A673 (cell line): ENCODE measurements at regions of chr3 and their contacts with region 1.

Region 1: DNA sequence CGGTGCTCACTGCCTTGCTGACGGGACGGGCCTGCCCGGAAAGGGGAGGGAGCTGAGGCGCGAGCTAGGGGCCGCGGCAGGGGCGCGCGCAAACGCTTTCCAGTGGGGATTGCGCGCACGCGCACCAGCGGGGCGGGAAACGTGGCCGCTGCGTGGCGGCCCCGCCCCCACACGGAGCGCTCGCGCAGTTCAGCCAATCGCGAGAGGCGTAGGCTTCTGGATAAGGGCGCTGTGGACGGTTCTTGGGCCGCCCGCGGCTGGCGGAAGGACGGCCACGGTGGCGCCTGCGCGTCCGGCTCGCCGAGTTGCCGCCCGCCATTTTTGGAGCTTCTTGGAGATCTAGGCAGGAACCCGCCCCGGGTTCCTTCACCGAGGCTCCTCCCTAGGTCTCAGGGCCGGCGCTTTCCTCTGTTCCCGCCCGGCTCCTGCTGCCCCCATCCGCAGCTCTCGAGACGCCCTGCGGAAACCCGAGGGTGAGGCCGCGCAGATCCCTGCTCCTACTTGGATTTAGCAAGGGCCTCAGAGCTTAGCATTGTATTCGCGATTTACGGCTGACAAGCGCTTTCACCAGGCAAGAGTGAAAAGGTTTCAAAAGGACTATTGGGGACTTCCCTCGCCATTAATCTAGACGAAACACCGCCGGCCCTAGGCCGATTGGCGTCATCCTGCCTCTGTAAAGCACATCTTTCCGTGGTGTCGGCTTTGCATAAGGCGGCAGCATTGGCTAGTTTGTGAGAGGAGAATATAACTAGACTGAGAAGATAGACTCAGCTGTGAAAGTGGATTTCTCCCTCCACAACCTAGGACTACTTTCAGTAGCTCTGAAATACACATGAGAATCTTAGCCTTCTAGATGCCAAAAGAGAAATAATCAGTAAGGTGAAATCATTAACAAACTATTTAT is 496 bp upstream of the STAG1 start:
- DNase-seq: peak; percentile 99
- H3K4me3 ChIP-seq: peak overlapping the region; percentile 65
- H3K27ac ChIP-seq: peak overlapping the region; percentile 98
- H3K4me1 ChIP-seq: peaks cover 33% of the 10 kb centered on the region
- H3K27me3 ChIP-seq: no peaks in the 10 kb centered on the region
- CTCF ChIP-seq: no peak; the same call in 1 of the 2 replicates

Region 2: GRCh38 chr3:136196401-136197158 is 556.1 kb before region 1 on chr3:
- CTCF ChIA-PET with region 1: interaction called, 16 read pairs
- POLR2A ChIA-PET with region 1: no interaction called
- intact Hi-C with region 1: loop called (anchors 5 kb)
- DNase-seq: peak; percentile 100
- H3K4me3 ChIP-seq: peak overlapping the region; percentile 92
- H3K27ac ChIP-seq: peak overlapping the region; percentile 98
- H3K4me1 ChIP-seq: peaks cover 27% of the 10 kb centered on the region
- H3K27me3 ChIP-seq: no peaks in the 10 kb centered on the region
- CTCF ChIP-seq: no peak

Region 3: GRCh38 chr3:136390574-136390973 is 362.1 kb before region 1 on chr3:
- CTCF ChIA-PET with region 1: interaction called, 38 read pairs
- POLR2A ChIA-PET with region 1: no interaction called
- intact Hi-C with region 1: loop called (anchors 1 kb)
- DNase-seq: no peak
- H3K4me3 ChIP-seq: no peak overlapping the region
- H3K27ac ChIP-seq: no peak overlapping the region
- H3K4me1 ChIP-seq: no peaks in the 10 kb centered on the region
- H3K27me3 ChIP-seq: no peaks in the 10 kb centered on the region
- CTCF ChIP-seq: no peak

Region 4: GRCh38 chr3:136567599-136568188 is 185.0 kb before region 1 on chr3:
- CTCF ChIA-PET with region 1: no interaction called
- POLR2A ChIA-PET with region 1: no interaction called
- intact Hi-C with region 1: loop called (anchors 5 kb)
- DNase-seq: peak; percentile 48
- H3K4me3 ChIP-seq: no peak overlapping the region
- H3K27ac ChIP-seq: peak overlapping the region; percentile 60
- H3K4me1 ChIP-seq: peaks cover 32% of the 10 kb centered on the region
- H3K27me3 ChIP-seq: no peaks in the 10 kb centered on the region
- CTCF ChIP-seq: no peak

Region 5: GRCh38 chr3:136838641-136839555 is 86.2 kb after region 1 on chr3:
- CTCF ChIA-PET with region 1: interaction called, 6 read pairs
- POLR2A ChIA-PET with region 1: no interaction called
- intact Hi-C with region 1: loop called (anchors 5 kb)
- DNase-seq: peak; percentile 96
- H3K4me3 ChIP-seq: peak overlapping the region; percentile 5
- H3K27ac ChIP-seq: peak overlapping the region; percentile 91
- H3K4me1 ChIP-seq: peaks cover 67% of the 10 kb centered on the region
- H3K27me3 ChIP-seq: no peaks in the 10 kb centered on the region
- CTCF ChIP-seq: no peak

Region 6: DNA sequence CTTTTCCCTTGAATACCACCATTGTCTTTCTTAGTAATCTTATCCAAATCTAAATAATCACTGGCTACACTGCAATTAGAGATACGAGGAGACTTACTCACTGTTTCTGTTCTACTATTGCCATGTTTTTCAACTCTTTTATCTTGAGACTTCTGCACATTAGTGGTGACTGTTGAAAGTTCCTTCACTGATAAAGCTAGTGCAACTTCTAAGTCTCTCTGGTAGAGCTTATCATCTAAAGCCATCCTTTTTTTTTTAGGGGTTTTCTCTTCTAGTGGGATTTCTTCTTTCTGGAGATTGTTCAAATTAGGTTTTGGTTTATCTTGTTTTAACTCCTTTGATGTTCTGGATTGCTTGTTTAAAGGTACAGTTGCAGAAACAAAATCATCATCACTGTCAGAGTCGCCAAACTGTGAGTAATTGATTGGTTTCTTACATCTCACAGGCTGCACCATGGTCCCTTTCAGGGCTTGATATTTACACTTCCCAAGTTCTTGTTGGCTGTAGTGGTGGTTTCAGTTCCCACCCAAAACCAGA is 147.0 kb after region 1 on chr3:
- CTCF ChIA-PET with region 1: no interaction called
- POLR2A ChIA-PET with region 1: interaction called, 12 read pairs
- intact Hi-C with region 1: no loop called
- DNase-seq: no peak
- H3K4me3 ChIP-seq: no peak overlapping the region
- H3K27ac ChIP-seq: no peak overlapping the region
- H3K4me1 ChIP-seq: peaks cover 31% of the 10 kb centered on the region
- H3K27me3 ChIP-seq: no peaks in the 10 kb centered on the region
- CTCF ChIP-seq: no peak